Activated naive CD4-positive, alpha-beta T cell treated with anti-CD3 and anti-CD28 coated beads for 36 hours (primary cell): ENCODE measurements at regions of chr11 and their contacts with region 1.

Region 1: GRCh38 chr11:108253176-108253575 is 30.3 kb downstream of the ATM start:
- DNase-seq: no peak
- H3K4me3 Mint-ChIP-seq: no peak overlapping the region
- H3K27ac Mint-ChIP-seq: no peak overlapping the region
- H3K4me1 Mint-ChIP-seq: peaks cover 52% of the 10 kb centered on the region
- H3K27me3 Mint-ChIP-seq: no peaks in the 10 kb centered on the region

Region 2: GRCh38 chr11:108206969-108207682 is 46.0 kb before region 1 on chr11:
- CTCF ChIA-PET with region 1: no interaction called
- intact Hi-C with region 1: no loop called
- DNase-seq: no peak
- H3K4me3 Mint-ChIP-seq: no peak overlapping the region
- H3K27ac Mint-ChIP-seq: no peak overlapping the region
- H3K4me1 Mint-ChIP-seq: peaks cover 68% of the 10 kb centered on the region
- H3K27me3 Mint-ChIP-seq: no peaks in the 10 kb centered on the region

Region 3: DNA sequence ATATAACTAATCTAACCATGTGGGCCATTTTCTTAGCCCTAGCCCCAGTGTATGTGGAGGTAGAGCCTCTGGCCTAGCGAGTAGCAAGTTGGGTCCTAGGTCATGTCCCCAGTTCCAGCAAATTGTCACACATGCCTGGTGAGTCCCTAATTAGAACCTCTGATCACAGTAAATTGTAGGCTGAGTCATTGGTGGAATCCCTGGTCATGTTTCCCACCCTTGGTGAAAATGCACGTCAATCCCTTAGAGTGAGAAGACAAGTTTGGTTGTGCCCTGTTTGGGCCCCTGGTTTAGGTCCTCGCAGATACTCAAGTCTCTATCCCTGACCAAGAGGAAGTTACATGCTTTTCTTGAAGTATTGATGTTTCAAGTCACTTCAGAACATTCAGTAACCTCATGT is 16.4 kb after region 1 on chr11:
- CTCF ChIA-PET with region 1: no interaction called
- intact Hi-C with region 1: loop called (anchors 2 kb)
- DNase-seq: peak; percentile 49
- H3K4me3 Mint-ChIP-seq: no peak overlapping the region
- H3K27ac Mint-ChIP-seq: peak overlapping the region; percentile 82
- H3K4me1 Mint-ChIP-seq: peaks cover 41% of the 10 kb centered on the region
- H3K27me3 Mint-ChIP-seq: no peaks in the 10 kb centered on the region